ENCODE measurements at regions of chr16 and their contacts with region 1.

Region 1: GRCh38 chr16:89122322-89122851 is 28.7 kb downstream of the ACSF3 start:
- DNase-seq: peak; percentile 73 to 81 (median 76)
- H3K4me3 ChIP-seq: no peak overlapping the region
- H3K4me3 Mint-ChIP-seq: peak overlapping the region in 5 of 8 donors; percentile 34 to 57 (median 39)
- H3K27ac ChIP-seq: peak overlapping the region; percentile 38
- H3K27ac Mint-ChIP-seq: peak overlapping the region; percentile 70 to 97 (median 92)
- H3K4me1 ChIP-seq: peaks cover 25% of the 10 kb centered on the region
- H3K4me1 Mint-ChIP-seq: peaks cover 14 to 33% (median 24%) of the 10 kb centered on the region in 4 donors
- H3K27me3 ChIP-seq: no peaks in the 10 kb centered on the region
- H3K27me3 Mint-ChIP-seq: no peaks in the 10 kb centered on the region

Region 2: DNA sequence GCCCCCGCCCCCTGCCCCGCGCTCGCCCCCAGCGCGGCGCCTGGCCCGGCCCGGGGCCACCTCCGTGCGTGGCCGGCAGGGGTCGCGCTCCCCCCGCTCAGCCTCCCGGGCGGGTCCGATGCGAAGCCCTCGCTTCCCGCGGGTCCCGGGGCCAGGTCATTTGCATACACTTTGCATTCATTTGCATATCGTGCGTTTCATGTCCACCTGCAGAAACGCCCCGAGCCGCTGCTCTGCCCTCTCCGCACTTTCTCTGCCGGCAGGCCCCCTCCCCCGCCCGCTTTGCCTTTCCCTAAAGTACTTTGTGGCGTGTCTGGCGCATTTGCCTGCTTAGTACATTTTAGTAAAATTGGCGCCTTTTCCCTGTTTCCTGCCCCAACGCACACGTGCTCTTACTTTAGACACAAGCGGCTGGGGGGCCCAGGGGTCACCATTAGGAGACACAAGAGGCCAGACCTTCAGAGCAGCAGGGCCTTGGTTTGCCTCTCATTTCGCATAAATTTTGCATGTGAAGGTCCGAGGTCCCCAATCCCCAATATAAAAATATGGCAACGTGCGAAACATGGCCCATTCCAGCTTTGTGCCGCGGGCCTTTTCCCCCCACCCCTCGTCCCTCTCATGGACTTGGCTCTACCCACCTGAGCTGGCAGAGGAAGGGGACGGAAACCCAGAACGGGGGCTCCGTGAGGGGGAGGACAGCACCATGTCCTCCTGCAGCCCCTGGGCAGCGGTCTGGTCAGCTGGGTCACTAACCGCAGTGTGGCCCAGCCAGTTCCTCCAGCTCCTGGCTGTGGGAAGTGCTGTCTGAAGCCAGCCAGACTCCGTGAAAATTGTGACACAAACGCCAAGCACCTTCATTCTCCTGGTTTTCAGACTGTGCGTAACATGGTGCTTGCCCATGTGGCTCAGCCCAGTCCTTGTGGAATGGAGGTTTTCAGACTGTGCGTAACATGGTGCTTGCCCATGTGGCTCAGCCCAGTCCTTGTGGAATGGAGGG is 180.2 kb before region 1 on chr16:
- CTCF ChIA-PET with region 1: no interaction called
- POLR2A ChIA-PET with region 1: no interaction called
- intact Hi-C with region 1: no loop called
- DNase-seq: peak in 4 of 5 donors; percentile 37 to 48 (median 42)
- H3K4me3 ChIP-seq: no peak overlapping the region
- H3K4me3 Mint-ChIP-seq: peak overlapping the region in 7 of 8 donors; percentile 41 to 70 (median 52)
- H3K27ac ChIP-seq: no peak overlapping the region
- H3K27ac Mint-ChIP-seq: peak overlapping the region in 1 of 7 donors; percentile 37
- H3K4me1 ChIP-seq: peaks cover 13% of the 10 kb centered on the region
- H3K4me1 Mint-ChIP-seq: peaks cover 0 to 14% (median 9%) of the 10 kb centered on the region in 4 donors
- H3K27me3 ChIP-seq: peaks cover 17% of the 10 kb centered on the region
- H3K27me3 Mint-ChIP-seq: peaks cover 20 to 33% of the 10 kb centered on the region in 2 donors

Region 3: DNA sequence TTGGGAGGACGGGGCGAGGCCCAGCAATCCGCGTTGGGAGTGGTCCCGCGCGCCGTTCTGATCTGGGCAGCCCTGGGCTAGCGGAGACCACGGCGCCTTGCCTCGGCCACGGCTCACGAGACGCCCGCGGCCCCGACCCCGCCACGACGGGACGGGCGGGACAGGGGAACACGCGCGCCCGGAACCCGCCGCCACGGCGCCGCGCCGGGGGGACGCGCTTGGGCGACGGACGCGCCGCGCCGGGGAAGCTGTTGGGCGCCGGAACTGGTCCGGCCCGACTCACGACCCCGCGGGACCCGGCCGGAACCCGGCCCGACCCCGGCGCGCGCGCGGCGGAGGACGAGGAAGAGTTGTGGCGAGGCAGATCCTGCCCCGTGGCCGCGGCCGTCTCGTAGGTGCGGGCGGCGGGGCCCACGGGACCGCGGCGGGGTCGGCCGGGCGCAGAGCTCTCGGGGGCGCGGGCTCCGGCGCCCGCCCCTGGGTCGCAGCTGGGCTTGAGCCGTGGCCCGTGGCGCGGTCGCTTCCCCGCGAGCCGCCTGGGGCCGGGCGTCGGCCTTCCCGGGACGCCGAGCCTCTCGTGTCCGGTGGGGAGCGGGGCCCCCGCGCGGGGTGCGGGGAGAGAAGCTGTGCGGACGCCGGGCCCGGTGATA is 28.7 kb before region 1 on chr16 and contains the start of gene ACSF3:
- CTCF ChIA-PET with region 1: no interaction called
- POLR2A ChIA-PET with region 1: interaction called, 12 read pairs
- intact Hi-C with region 1: no loop called
- DNase-seq: peak; percentile 59 to 72 (median 63)
- H3K4me3 ChIP-seq: peak within 1 kb of the TSS; percentile 69 to 84
- H3K4me3 Mint-ChIP-seq: peak within 1 kb of the TSS; percentile 94 to 99 (median 97)
- H3K27ac ChIP-seq: peak within 1 kb of the TSS; percentile 51
- H3K27ac Mint-ChIP-seq: peak within 1 kb of the TSS; percentile 90 to 99 (median 97)
- H3K4me1 ChIP-seq: peaks cover 49% of the 10 kb centered on the region
- H3K4me1 Mint-ChIP-seq: peaks cover 38 to 58% (median 49%) of the 10 kb centered on the region in 4 donors
- H3K27me3 ChIP-seq: no peaks in the 10 kb centered on the region
- H3K27me3 Mint-ChIP-seq: peaks cover 5 to 10% of the 10 kb centered on the region in 2 donors
- total RNA-seq, gene ACSF3: 65.3 to 71.2 TPM